GM10248 (cell line): ENCODE measurements at regions of chr11 and their contacts with region 1.

Region 1: GRCh38 chr11:107683807-107684206 is 28.0 kb downstream of the SLN start:
- DNase-seq: no peak
- CTCF ChIP-seq: no peak

Region 2: DNA sequence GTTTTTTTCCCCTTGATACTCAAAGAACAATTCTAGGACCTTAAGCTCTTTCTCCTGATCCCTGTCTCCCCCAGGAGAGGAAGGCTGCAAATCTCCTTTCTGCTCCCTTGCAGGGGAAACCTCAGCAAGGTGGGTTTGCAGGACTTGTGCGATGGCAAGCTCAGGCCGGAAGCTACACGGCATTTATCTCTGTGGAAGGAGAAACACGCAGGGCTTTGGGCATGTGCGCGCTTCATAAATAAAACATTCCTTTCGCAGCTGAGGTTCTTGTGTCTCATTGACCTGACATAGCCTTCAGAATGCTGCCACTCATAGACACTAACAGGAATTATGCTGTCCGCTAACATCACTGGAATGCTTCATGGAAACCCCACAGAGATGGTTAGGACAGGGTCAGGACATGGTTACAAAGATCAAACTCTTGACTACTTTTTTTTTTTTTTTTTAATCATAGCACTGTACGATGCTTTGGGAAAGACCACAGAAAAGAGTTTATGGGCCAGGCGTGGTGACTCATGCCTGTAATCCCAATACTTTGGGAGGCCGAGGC is 14.5 kb before region 1 on chr11:
- CTCF ChIA-PET with region 1: interaction called, 22 read pairs
- POLR2A ChIA-PET with region 1: no interaction called
- DNase-seq: no peak
- CTCF ChIP-seq: no peak

Region 3: DNA sequence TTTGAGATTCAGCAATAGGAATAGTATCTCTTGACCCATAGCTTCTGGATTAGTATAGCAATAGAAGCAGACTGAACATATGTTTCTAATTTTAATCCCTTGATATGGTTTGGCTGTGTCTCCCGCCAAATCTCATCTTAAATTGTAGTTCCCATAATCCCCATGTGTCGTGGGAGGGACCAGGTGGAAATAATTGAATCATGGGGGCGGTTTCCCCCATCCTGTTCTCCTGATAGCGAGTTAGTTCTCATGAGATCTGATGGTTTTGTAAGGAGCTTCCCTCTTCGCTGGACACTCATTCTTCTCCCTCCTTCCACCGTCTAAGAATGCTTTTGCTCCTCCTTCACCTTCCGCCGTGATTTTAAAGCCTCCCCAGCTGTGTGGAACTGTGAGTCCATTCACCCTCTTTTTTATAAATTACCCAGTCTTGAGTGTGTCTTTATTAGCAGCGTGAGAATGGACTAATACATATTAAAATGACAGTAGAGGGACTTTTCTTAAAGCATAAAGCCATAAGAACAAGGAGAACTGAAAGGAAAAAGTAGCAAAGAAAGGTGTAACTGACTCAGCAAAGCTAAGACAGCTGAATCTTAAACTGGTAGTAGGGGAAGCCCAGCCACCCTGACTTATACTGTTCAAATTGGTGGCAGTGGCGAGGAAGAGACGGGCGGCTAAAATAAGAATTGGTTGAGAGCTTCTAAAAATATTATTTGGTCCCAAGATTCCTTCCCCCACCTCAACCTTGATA is 48.3 kb after region 1 on chr11:
- CTCF ChIA-PET with region 1: no interaction called
- POLR2A ChIA-PET with region 1: no interaction called
- DNase-seq: peak; percentile 19
- CTCF ChIP-seq: no peak